Naive thymus-derived CD4-positive, alpha-beta T cell (primary cell): ENCODE measurements at regions of chr11 and their contacts with region 1.

Region 1: GRCh38 chr11:69296890-69297786 is 3.2 kb downstream of the MYEOV start:
- DNase-seq: peak; percentile 48 to 86 (median 63)
- ATAC-seq: peak; percentile 68
- H3K4me3 ChIP-seq: peak overlapping the region; percentile 39
- H3K4me3 Mint-ChIP-seq: peak overlapping the region; percentile 35 to 90 (median 87)
- H3K27ac ChIP-seq: peak overlapping the region; percentile 49
- H3K27ac Mint-ChIP-seq: peak overlapping the region; percentile 4 to 93 (median 86)
- H3K4me1 ChIP-seq: peaks cover 36 to 37% of the 10 kb centered on the region in 2 donors
- H3K4me1 Mint-ChIP-seq: peaks cover 33 to 68% (median 56%) of the 10 kb centered on the region in 7 donors
- H3K27me3 ChIP-seq: no peaks in the 10 kb centered on the region
- H3K27me3 Mint-ChIP-seq: no peaks in the 10 kb centered on the region

Region 2: GRCh38 chr11:69101115-69101791 is 195.9 kb before region 1 on chr11:
- CTCF ChIA-PET with region 1: interaction called, 11 read pairs
- POLR2A ChIA-PET with region 1: no interaction called
- intact Hi-C with region 1: loop called (anchors 1 kb)
- DNase-seq: peak; percentile 58 to 88 (median 76)
- ATAC-seq: peak; percentile 96
- H3K4me3 ChIP-seq: no peak overlapping the region
- H3K4me3 Mint-ChIP-seq: no peak overlapping the region
- H3K27ac ChIP-seq: no peak overlapping the region
- H3K27ac Mint-ChIP-seq: peak overlapping the region in 1 of 9 donors; percentile 26
- H3K4me1 ChIP-seq: peaks cover 0 to 7% of the 10 kb centered on the region in 2 donors
- H3K4me1 Mint-ChIP-seq: peaks cover 2 to 18% (median 5%) of the 10 kb centered on the region in 7 donors
- H3K27me3 ChIP-seq: no peaks in the 10 kb centered on the region
- H3K27me3 Mint-ChIP-seq: peaks cover 0 to 3% (median 0%) of the 10 kb centered on the region in 5 donors

Region 3: GRCh38 chr11:69311767-69312385 is 14.7 kb after region 1 on chr11:
- CTCF ChIA-PET with region 1: interaction called, 8 read pairs
- POLR2A ChIA-PET with region 1: interaction called, 7 read pairs
- intact Hi-C with region 1: loop called in 1 of 2 experiments (anchors 1 kb)
- DNase-seq: peak in 7 of 9 donors; percentile 30 to 53 (median 49)
- ATAC-seq: peak; percentile 62
- H3K4me3 ChIP-seq: peak overlapping the region; percentile 43
- H3K4me3 Mint-ChIP-seq: peak overlapping the region; percentile 56 to 81 (median 75)
- H3K27ac ChIP-seq: peak overlapping the region; percentile 55
- H3K27ac Mint-ChIP-seq: peak overlapping the region; percentile 55 to 91 (median 79)
- H3K4me1 ChIP-seq: peaks cover 23 to 27% of the 10 kb centered on the region in 2 donors
- H3K4me1 Mint-ChIP-seq: peaks cover 18 to 48% (median 43%) of the 10 kb centered on the region in 7 donors
- H3K27me3 ChIP-seq: no peaks in the 10 kb centered on the region
- H3K27me3 Mint-ChIP-seq: no peaks in the 10 kb centered on the region

Region 4: GRCh38 chr11:69368119-69368881 is 71.2 kb after region 1 on chr11:
- CTCF ChIA-PET with region 1: no interaction called
- POLR2A ChIA-PET with region 1: no interaction called
- intact Hi-C with region 1: loop called in 1 of 2 experiments (anchors 10 kb)
- DNase-seq: peak in 1 of 9 donors; percentile 16
- ATAC-seq: no peak
- H3K4me3 ChIP-seq: no peak overlapping the region
- H3K4me3 Mint-ChIP-seq: no peak overlapping the region
- H3K27ac ChIP-seq: no peak overlapping the region
- H3K27ac Mint-ChIP-seq: peak overlapping the region in 1 of 9 donors; percentile 41
- H3K4me1 ChIP-seq: no peaks in the 10 kb centered on the region
- H3K4me1 Mint-ChIP-seq: peaks cover 0 to 6% (median 0%) of the 10 kb centered on the region in 7 donors
- H3K27me3 ChIP-seq: no peaks in the 10 kb centered on the region
- H3K27me3 Mint-ChIP-seq: peaks cover 0 to 11% (median 0%) of the 10 kb centered on the region in 5 donors

Region 5: DNA sequence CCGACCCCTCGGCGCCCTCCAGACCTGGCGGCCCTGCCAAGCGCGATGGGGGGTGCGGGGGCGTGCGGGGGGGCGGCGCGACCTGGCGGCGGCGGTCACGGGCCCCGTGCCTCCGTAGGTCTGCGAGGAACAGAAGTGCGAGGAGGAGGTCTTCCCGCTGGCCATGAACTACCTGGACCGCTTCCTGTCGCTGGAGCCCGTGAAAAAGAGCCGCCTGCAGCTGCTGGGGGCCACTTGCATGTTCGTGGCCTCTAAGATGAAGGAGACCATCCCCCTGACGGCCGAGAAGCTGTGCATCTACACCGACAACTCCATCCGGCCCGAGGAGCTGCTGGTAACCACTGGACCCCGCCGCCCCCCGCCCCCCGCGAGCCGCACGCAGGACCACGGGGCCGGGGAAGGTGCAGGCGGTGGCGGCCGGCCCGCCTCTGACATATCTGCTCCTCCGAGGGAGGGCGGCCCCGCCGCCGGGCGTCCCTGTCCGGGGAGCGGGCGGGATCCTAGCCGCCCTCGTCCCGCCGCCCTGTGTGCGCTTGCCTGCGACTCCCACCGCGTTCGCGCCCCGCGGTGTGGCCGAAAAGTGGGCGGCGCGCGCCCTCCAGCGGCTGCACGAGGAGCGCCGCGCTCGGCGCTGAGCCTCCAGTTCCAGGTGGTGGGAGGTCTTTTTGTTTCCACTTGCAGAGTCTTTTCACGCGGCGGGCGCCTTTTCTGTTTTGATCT is 345.9 kb after region 1 on chr11:
- CTCF ChIA-PET with region 1: interaction called, 32 read pairs
- POLR2A ChIA-PET with region 1: no interaction called
- intact Hi-C with region 1: loop called in 1 of 2 experiments (anchors 1 kb)
- DNase-seq: peak; percentile 57 to 88 (median 83)
- ATAC-seq: peak; percentile 90
- H3K4me3 ChIP-seq: peak overlapping the region; percentile 61
- H3K4me3 Mint-ChIP-seq: peak overlapping the region; percentile 49 to 95 (median 78)
- H3K27ac ChIP-seq: peak overlapping the region; percentile 48
- H3K27ac Mint-ChIP-seq: peak overlapping the region in 1 of 9 donors; percentile 41
- H3K4me1 ChIP-seq: peaks cover 3 to 21% of the 10 kb centered on the region in 2 donors
- H3K4me1 Mint-ChIP-seq: peaks cover 12 to 30% (median 25%) of the 10 kb centered on the region in 7 donors
- H3K27me3 ChIP-seq: peaks cover 9 to 16% of the 10 kb centered on the region in 2 donors
- H3K27me3 Mint-ChIP-seq: peaks cover 23 to 29% (median 26%) of the 10 kb centered on the region in 5 donors